HEK293 (cell line): ENCODE measurements at regions of chr10 and their contacts with region 1.

Region 1: GRCh38 chr10:124530215-124530665 is 68.6 kb downstream of the LHPP start:
- H3K4me3 ChIP-seq: no peak overlapping the region
- H3K27ac ChIP-seq: no peak overlapping the region
- H3K4me1 ChIP-seq: no peaks in the 10 kb centered on the region
- CTCF ChIP-seq: peak; percentile 96

Region 2: DNA sequence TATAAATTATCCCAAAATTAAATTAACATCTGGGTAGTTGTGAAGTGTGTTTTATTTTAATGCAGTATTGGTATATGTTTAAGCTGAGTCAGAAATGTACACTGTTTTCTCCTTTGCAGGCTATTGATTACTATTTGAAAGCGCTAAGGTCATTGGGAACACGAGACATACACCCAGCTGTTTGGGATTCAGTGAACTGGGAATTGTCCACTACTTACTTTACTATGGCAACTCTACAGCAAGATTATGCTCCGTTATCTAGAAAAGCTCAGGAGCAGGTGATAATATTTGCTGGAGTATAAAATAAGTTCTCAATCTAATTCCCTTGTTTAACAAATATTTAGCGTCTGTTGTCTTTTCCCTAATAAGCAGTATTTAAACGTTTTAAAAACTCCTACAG is 1217.2 kb after region 1 on chr10:
- CTCF ChIA-PET with region 1: interaction called, 10 read pairs
- POLR2A ChIA-PET with region 1: no interaction called
- H3K4me3 ChIP-seq: no peak overlapping the region
- H3K27ac ChIP-seq: no peak overlapping the region
- H3K4me1 ChIP-seq: no peaks in the 10 kb centered on the region
- CTCF ChIP-seq: no peak